PC-9 (cell line): ENCODE measurements at regions of chr14 and their contacts with region 1.

Region 1: DNA sequence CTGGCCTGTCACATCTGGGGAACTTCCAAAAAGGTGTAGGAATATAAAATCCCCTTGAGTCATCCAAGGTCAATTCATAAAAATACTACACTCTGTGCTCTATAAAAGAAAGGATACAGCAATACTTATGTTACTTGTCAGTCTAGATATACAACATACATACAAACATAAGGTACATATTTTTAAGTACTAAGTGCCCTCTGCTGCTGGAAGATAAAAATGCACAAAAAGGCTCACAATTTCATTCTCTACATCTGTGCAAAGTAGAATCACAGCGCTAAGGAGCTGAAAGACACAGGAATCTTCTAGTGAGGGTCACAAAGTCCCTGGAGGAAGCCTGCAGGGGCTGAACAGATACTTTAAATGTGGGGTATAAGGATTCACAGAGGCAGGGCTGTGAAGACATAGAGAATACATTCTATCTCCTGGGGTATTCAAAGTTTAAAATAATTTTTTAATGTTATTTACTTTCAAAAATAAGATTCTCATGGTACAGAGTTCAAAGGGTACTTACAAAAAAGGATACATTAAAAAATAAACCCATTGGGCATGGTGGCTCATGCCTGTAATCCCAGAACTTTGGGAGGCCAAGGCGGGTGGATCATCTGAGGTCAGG is 10.2 kb upstream of the GOLGA5 start:
- DNase-seq: peak; percentile 24 to 71
- H3K4me3 ChIP-seq: no peak overlapping the region
- H3K27ac ChIP-seq: no peak overlapping the region
- H3K4me1 ChIP-seq: peaks cover 38% of the 10 kb centered on the region
- H3K27me3 ChIP-seq: no peaks in the 10 kb centered on the region
- CTCF ChIP-seq: peak; percentile 78

Region 2: DNA sequence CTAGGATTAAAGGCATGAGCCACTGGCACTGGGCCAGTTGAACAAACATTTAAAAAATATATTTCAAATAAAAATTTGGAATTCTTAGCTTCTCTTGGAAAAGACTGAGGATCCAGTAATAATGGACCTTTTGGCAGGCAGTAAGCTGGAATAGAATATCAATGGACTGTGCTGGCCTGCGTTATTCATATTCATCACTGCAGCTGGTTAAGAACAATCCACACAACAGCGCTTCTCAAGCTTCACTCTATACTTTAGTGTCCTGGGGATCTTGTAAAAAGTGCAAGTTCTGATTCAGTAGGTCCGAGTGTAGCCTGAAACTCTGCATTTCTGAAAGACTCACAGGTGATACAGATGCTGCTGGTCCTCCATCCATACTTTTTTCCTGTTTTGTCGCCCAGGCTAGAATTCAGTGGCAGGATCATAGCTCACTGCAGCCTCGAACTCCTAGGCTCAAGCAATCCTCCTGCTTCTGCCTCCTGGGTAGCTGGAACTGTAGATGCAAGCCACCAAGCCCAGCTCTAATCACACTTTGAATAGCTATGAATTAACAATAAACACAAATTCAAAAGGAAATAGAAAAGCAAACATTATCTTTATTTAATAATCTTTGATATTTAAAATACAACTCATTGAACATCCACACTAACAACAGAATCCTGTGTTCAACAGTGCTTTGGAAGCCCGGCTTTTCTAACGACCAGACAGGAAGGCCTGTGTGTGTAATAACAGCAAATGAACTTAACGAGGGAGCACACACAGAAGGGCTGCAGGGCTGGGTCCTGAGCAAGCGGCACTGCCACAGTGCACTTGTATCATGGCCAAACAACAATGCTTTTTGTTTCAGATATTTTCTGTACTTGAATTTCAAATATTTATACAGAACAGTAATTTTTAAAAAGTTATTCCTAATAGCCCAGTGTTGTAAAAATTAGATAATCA is 725.7 kb before region 1 on chr14:
- CTCF ChIA-PET with region 1: no interaction called
- POLR2A ChIA-PET with region 1: no interaction called
- intact Hi-C with region 1: no loop called
- DNase-seq: no peak
- H3K4me3 ChIP-seq: no peak overlapping the region
- H3K27ac ChIP-seq: no peak overlapping the region
- H3K4me1 ChIP-seq: no peaks in the 10 kb centered on the region
- H3K27me3 ChIP-seq: no peaks in the 10 kb centered on the region
- CTCF ChIP-seq: no peak

Region 3: GRCh38 chr14:92563359-92563758 is 220.6 kb before region 1 on chr14:
- CTCF ChIA-PET with region 1: no interaction called
- POLR2A ChIA-PET with region 1: no interaction called
- intact Hi-C with region 1: no loop called
- DNase-seq: peak; percentile 5 to 76
- H3K4me3 ChIP-seq: no peak overlapping the region
- H3K27ac ChIP-seq: peak overlapping the region; percentile 87
- H3K4me1 ChIP-seq: peaks cover 52% of the 10 kb centered on the region
- H3K27me3 ChIP-seq: no peaks in the 10 kb centered on the region
- CTCF ChIP-seq: no peak

Region 4: DNA sequence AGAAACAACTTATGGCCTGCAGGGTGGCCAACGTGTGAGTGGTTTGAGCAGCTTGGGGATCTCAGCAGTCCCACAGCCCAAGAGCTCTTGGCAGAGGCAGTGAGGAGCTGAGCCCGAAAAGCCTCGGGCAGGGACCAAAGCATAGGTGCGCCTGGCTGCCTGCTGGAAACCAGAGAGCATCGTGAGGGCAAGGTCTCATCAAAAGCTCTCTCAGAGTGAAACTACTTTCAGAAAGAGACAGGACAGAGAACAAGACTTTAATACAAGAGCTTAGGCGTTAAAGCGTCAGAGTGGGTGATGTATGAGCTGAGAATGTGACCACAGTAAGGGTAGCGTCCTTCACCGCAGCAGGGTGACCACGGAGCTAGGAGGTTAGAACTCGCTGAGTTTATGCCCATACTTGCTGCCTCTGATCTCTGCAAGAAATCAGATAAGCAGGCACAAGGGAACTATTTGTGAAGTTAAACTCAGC is 66.3 kb before region 1 on chr14:
- CTCF ChIA-PET with region 1: no interaction called
- POLR2A ChIA-PET with region 1: no interaction called
- intact Hi-C with region 1: loop called (anchors 1 kb)
- DNase-seq: no peak
- H3K4me3 ChIP-seq: no peak overlapping the region
- H3K27ac ChIP-seq: no peak overlapping the region
- H3K4me1 ChIP-seq: peaks cover 8% of the 10 kb centered on the region; the same call in 1 of the 2 replicates
- H3K27me3 ChIP-seq: no peaks in the 10 kb centered on the region
- CTCF ChIP-seq: no peak